ENCODE measurements at regions of chr1 and their contacts with region 1.

Region 1: DNA sequence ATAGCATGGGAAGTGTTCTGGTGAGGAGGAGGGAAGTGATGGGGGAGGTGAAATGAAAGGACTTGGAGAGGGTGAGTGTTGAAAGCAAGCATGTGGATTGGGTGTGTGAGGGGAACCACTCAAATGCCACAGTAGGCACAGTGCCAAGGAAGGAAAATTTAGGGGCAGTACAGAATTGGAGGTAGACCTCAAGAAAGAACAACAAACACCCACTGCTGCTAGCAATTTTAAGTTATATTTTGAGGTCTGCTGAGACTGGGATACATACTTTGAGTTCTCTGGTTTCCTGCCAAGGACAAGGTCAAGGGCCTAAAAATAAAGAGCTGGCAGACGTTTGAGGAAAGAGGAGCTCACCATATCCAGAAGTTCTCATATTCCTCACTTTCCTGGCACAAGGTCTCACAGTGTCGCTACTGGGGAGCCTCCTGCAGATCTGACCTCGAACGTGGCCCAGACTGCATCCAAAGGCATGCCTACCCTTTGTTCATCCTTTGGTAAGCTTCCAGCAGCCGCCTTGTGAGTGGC is 104.0 kb downstream of the BRINP2 start:
- DNase-seq: peak; percentile 26 to 59
- ATAC-seq: peak; percentile 90 to 98 (median 94)
- H3K4me3 ChIP-seq: no peak overlapping the region
- H3K27ac ChIP-seq: peak overlapping the region; percentile 59
- H3K4me1 ChIP-seq: peaks cover 29% of the 10 kb centered on the region
- H3K27me3 ChIP-seq: no peaks in the 10 kb centered on the region
- CTCF ChIP-seq: no peak

Region 2: DNA sequence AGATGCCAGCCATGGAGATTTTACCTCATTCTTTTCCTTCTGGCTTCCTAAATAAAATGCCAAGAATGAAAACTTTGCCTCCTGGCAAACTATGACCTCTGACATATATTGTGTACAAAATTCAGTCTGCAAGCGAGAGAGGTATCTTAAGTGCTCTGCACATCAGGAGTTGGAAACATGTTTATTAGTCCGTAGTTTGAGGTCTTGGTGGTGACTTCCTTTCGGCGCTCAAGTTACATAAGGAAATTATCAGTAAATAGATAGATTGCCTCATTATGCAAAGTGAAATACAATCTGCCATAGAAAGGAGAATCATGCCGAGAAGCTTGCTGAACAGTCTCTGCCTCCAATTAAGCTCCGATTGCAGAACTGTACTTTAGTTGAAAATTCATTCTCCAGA is 167.8 kb after region 1 on chr1:
- intact Hi-C with region 1: loop called in 1 of 2 experiments (anchors 5 kb)
- DNase-seq: no peak
- ATAC-seq: peak in 1 of 4 donors; percentile 42
- H3K4me3 ChIP-seq: no peak overlapping the region
- H3K27ac ChIP-seq: peak overlapping the region; percentile 65
- H3K4me1 ChIP-seq: peaks cover 54% of the 10 kb centered on the region
- H3K27me3 ChIP-seq: no peaks in the 10 kb centered on the region
- CTCF ChIP-seq: no peak